Common myeloid progenitor, CD34-positive (primary cell): ENCODE measurements at regions of chr20 and their contacts with region 1.

Region 1: DNA sequence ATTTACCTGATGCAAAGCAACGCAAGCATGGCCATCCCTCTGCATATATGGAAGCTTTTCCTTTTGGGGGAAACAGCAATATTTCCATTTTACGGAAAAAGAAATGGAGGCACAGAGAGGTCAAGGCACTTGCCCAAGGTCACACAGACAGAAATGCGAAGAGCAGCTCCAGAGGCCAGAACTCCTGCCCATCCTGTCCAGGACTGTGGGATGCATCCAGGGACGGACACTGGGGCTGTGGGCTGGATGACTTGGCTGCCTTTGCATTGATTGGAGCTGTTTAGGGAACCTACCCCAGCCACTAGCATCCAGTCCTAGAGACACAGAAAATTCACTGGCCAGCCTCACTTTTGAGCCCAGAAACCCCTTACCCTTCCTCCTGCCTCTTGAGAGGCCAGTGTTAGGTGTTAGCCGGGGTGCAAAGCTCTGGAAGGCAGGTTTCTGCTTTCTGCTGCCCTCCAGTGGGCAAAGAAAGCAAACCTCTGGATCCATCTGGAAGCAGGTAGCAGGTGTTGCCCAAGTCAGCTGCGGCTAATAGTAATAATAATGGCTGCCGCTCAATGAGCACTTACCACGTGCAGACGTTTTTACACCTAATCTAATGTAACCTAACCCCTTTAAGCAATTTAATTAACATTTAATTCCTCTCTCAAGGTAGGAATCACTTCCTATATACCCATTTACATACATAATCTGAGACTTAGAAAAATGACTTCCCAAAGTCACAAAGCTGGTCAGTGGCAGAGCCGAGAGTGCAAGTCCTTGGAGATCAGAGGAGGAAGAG is 31.7 kb upstream of the CCN5 start:
- DNase-seq: peak; percentile 39 to 81 (median 75)
- H3K4me3 ChIP-seq: no peak overlapping the region
- H3K27ac ChIP-seq: no peak overlapping the region
- H3K4me1 ChIP-seq: peaks cover 0 to 17% (median 12%) of the 10 kb centered on the region in 4 experiments
- H3K27me3 ChIP-seq: no peaks in the 10 kb centered on the region

Region 2: GRCh38 chr20:43893930-43894329 is 789.5 kb before region 1 on chr20:
- CTCF ChIA-PET with region 1: no interaction called
- POLR2A ChIA-PET with region 1: no interaction called
- DNase-seq: no peak
- H3K4me3 ChIP-seq: no peak overlapping the region
- H3K27ac ChIP-seq: no peak overlapping the region
- H3K4me1 ChIP-seq: no peaks in the 10 kb centered on the region
- H3K27me3 ChIP-seq: peaks cover 0 to 28% (median 2%) of the 10 kb centered on the region in 5 experiments

Region 3: GRCh38 chr20:44615169-44615791 is 68.2 kb before region 1 on chr20:
- CTCF ChIA-PET with region 1: interaction called, 23 read pairs
- POLR2A ChIA-PET with region 1: interaction called, 4 read pairs
- DNase-seq: peak in 2 of 3 donors; percentile 71 to 75
- H3K4me3 ChIP-seq: no peak overlapping the region
- H3K27ac ChIP-seq: peak overlapping the region in 1 of 2 experiments; percentile 70
- H3K4me1 ChIP-seq: peaks cover 9 to 65% (median 32%) of the 10 kb centered on the region in 4 experiments
- H3K27me3 ChIP-seq: no peaks in the 10 kb centered on the region

Region 4: GRCh38 chr20:44651684-44652423 is 31.6 kb before region 1 on chr20 and contains the start of gene ADA:
- CTCF ChIA-PET with region 1: interaction called, 18 read pairs
- POLR2A ChIA-PET with region 1: no interaction called
- DNase-seq: peak in 2 of 3 donors; percentile 63 to 76
- H3K4me3 ChIP-seq: peak within 1 kb of the TSS; percentile 82 to 99 (median 92)
- H3K27ac ChIP-seq: peak within 1 kb of the TSS; percentile 25 to 75
- H3K4me1 ChIP-seq: peaks cover 7 to 74% (median 56%) of the 10 kb centered on the region in 4 experiments
- H3K27me3 ChIP-seq: no peaks in the 10 kb centered on the region

Region 5: GRCh38 chr20:44702776-44703175 is 19.3 kb after region 1 on chr20:
- CTCF ChIA-PET with region 1: interaction called, 14 read pairs
- POLR2A ChIA-PET with region 1: no interaction called
- DNase-seq: peak in 2 of 3 donors; percentile 35 to 44
- H3K4me3 ChIP-seq: peak overlapping the region in 2 of 7 experiments; percentile 6 to 19
- H3K27ac ChIP-seq: no peak overlapping the region
- H3K4me1 ChIP-seq: peaks cover 0 to 13% (median 12%) of the 10 kb centered on the region in 4 experiments
- H3K27me3 ChIP-seq: no peaks in the 10 kb centered on the region

Region 6: DNA sequence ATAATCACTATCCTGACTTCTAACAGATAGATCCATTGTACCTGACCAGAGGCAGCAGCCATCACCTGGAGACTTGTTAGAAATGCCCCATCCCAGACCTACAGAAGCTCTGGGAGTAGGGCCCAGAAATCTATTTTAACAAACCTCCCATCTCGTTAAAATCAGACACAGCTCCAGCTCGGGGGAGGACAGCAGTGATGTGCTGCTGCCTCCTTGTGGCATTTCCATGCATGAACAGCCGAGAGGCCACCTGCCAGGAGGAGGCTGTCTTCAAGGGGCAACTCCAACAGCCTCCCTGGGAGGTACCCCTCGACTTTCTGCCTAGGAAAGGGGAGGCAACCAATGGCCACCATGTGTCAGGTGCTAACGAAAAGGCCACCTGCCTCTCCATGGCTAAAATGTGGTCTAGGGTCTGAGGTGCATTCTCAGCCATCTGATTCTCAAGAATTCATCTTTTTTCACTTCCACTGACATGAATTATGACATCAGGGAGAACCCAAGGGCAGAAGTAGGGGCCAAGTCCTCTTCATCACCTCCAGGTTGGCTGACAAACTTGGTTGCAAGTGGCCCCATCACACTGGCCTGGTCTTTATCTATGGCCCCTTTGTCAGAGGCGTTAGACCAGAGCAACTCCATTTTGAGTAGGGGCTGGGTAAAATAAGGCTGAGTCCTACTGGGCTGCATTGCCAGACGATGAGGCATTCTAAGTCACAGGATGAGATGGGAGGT is 50.0 kb after region 1 on chr20:
- CTCF ChIA-PET with region 1: interaction called, 130 read pairs
- POLR2A ChIA-PET with region 1: no interaction called
- DNase-seq: peak; percentile 60 to 83 (median 76)
- H3K4me3 ChIP-seq: no peak overlapping the region
- H3K27ac ChIP-seq: no peak overlapping the region
- H3K4me1 ChIP-seq: peaks cover 0 to 13% (median 6%) of the 10 kb centered on the region in 4 experiments
- H3K27me3 ChIP-seq: no peaks in the 10 kb centered on the region

Region 7: GRCh38 chr20:44747166-44748004 is 63.9 kb after region 1 on chr20:
- CTCF ChIA-PET with region 1: interaction called, 14 read pairs
- POLR2A ChIA-PET with region 1: no interaction called
- DNase-seq: peak; percentile 74 to 86 (median 79)
- H3K4me3 ChIP-seq: no peak overlapping the region
- H3K27ac ChIP-seq: no peak overlapping the region
- H3K4me1 ChIP-seq: peaks cover 0 to 21% (median 15%) of the 10 kb centered on the region in 4 experiments
- H3K27me3 ChIP-seq: peaks cover 7 to 53% (median 22%) of the 10 kb centered on the region in 5 experiments